Mammary epithelial cell (primary cell): ENCODE measurements at regions of chr10 and their contacts with region 1.

Region 1: GRCh38 chr10:71725998-71726579 is 6.5 kb upstream of the C10orf105 start:
- DNase-seq: peak; percentile 33
- H3K4me3 ChIP-seq: no peak overlapping the region
- H3K27ac ChIP-seq: no peak overlapping the region
- H3K4me1 ChIP-seq: peaks cover 27% of the 10 kb centered on the region
- H3K27me3 ChIP-seq: no peaks in the 10 kb centered on the region
- CTCF ChIP-seq: peak; percentile 38 to 39

Region 2: DNA sequence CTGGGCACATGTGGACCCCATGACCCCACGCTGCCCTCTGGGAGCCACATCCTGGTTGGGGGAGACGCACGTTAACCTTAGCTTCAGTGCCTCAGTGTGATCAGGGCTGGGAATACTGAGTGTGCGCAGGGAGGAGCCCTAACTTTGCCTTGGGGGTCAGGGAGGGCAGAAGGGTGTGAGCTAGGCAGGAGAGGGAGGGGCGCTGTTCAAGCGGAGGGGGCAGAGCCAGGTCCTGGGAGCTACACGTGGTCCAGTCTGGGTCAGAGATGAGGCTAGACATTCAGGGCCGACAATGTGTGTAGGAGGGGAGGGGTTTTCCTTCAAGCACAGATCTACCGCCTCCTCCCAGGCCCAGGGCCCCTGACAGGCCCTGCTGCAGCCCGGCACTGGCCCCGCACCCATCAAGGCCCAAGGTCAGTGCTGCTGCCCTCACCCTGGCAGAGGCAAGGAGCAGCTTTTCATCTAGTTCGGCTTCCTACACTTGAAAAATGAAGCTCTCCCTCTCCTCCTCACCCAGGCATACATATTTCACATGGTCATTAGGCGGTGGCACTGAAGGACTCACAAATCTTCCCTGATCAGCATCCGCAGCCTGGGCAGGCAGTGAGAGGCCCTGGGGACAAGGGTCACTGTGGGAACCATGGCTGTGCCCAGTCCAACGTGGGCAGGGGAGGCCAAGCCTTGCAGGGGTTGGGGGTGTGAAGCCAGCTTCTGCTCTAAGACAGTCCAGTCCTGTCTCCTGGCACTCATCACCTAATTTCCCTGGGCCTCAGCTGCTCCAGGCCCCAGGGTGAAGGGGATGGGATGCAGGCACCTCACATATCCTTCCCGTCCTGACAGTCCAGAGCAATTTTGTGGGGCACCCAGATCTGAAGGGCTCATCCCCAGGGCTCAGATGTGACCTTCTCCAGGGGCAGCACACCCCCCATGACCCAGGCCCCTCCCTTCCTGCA is 53.8 kb before region 1 on chr10:
- CTCF ChIA-PET with region 1: no interaction called
- dilution Hi-C with region 1: no loop called
- in situ Hi-C with region 1: no loop called
- intact Hi-C with region 1: no loop called
- DNase-seq: no peak
- H3K4me3 ChIP-seq: no peak overlapping the region
- H3K27ac ChIP-seq: no peak overlapping the region
- H3K4me1 ChIP-seq: no peaks in the 10 kb centered on the region
- H3K27me3 ChIP-seq: peaks cover 3% of the 10 kb centered on the region
- CTCF ChIP-seq: no peak

Region 3: GRCh38 chr10:71713135-71714030 is 12.7 kb before region 1 on chr10:
- CTCF ChIA-PET with region 1: no interaction called
- dilution Hi-C with region 1: no loop called
- in situ Hi-C with region 1: no loop called
- intact Hi-C with region 1: loop called (anchors 1 kb)
- DNase-seq: peak; percentile 95
- H3K4me3 ChIP-seq: no peak overlapping the region
- H3K27ac ChIP-seq: peak overlapping the region; percentile 73
- H3K4me1 ChIP-seq: peaks cover 34% of the 10 kb centered on the region
- H3K27me3 ChIP-seq: no peaks in the 10 kb centered on the region
- CTCF ChIP-seq: peak; percentile 10 to 33

Region 4: GRCh38 chr10:71840177-71840957 is 114.3 kb after region 1 on chr10:
- CTCF ChIA-PET with region 1: no interaction called
- dilution Hi-C with region 1: no loop called
- in situ Hi-C with region 1: no loop called
- intact Hi-C with region 1: no loop called
- DNase-seq: peak; percentile 88
- H3K4me3 ChIP-seq: no peak overlapping the region
- H3K27ac ChIP-seq: peak overlapping the region; percentile 98
- H3K4me1 ChIP-seq: peaks cover 57% of the 10 kb centered on the region
- H3K27me3 ChIP-seq: no peaks in the 10 kb centered on the region
- CTCF ChIP-seq: no peak